Prostate gland (tissue), 2 donors: ENCODE measurements at regions of chr17 and their contacts with region 1.

Region 1: GRCh38 chr17:33328129-33328528 is 35.0 kb upstream of the ASIC2 start:
- DNase-seq: no peak
- H3K4me3 ChIP-seq: no peak overlapping the region
- H3K27ac ChIP-seq: no peak overlapping the region
- H3K4me1 ChIP-seq: no peaks in the 10 kb centered on the region
- H3K27me3 ChIP-seq: no peaks in the 10 kb centered on the region
- CTCF ChIP-seq: no peak
- POLR2A ChIP-seq: no peak

Region 2: GRCh38 chr17:33120103-33120502 is 208.0 kb before region 1 on chr17:
- intact Hi-C with region 1: no loop called
- DNase-seq: no peak
- H3K4me3 ChIP-seq: no peak overlapping the region
- H3K27ac ChIP-seq: no peak overlapping the region
- H3K4me1 ChIP-seq: no peaks in the 10 kb centered on the region
- H3K27me3 ChIP-seq: no peaks in the 10 kb centered on the region
- CTCF ChIP-seq: no peak
- POLR2A ChIP-seq: no peak

Region 3: GRCh38 chr17:33267260-33267790 is 60.8 kb before region 1 on chr17:
- intact Hi-C with region 1: loop called (anchors 10 kb)
- DNase-seq: no peak
- H3K4me3 ChIP-seq: no peak overlapping the region
- H3K27ac ChIP-seq: no peak overlapping the region
- H3K4me1 ChIP-seq: no peaks in the 10 kb centered on the region
- H3K27me3 ChIP-seq: no peaks in the 10 kb centered on the region
- CTCF ChIP-seq: no peak
- POLR2A ChIP-seq: no peak

Region 4: DNA sequence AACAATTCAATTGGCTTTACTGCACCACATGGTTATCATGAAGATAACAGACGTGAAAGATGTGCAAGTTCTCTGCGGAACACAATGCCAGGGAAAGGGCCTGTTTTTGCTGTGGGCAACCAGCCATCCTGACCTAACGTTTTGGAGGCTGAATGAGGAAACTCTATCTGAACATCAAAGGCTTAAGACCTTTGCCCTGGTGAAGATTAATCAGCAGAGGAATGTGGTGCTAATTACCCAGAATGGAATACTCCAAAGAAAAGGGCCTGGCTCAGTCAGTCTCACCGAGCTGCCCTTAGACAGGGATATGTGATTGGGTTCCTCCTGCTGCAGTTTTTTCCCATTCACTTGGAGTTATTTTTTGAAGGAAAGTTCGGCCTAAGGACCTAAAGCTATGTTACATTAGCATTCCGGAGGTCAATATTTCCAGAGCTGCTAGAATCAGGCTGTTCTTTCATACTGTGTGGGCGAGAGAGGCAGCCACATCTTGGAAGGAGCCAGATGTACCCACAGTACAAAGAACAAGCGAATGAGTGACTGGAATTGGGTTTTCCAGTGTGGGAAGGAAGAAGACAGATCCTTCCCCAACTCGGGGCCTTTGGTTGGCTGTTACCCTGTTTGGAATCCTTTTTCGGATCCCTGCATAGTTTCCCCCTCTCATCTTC is 50.6 kb before region 1 on chr17:
- intact Hi-C with region 1: no loop called
- DNase-seq: no peak
- H3K4me3 ChIP-seq: no peak overlapping the region
- H3K27ac ChIP-seq: no peak overlapping the region
- H3K4me1 ChIP-seq: no peaks in the 10 kb centered on the region
- H3K27me3 ChIP-seq: no peaks in the 10 kb centered on the region
- CTCF ChIP-seq: no peak
- POLR2A ChIP-seq: no peak

Region 5: DNA sequence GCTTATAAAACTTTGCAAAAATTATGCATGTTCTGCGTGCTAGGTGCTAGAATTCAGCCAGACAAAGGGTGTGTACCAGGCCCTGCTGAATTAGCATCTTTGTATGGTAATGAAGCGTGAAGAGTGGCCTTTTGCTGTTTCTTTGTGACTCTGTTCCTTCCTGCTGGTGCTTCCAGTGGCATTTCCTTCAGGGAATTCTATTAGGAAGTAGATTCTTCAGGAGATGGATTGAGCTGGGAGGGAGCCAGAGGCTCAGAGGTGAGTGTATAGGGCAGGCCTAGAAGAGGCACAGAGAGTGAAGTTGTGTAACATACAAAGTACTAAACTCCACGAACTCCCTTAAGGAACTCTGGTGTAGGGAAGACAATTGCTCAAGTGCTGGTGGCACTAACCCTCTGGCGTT is 38.9 kb after region 1 on chr17:
- intact Hi-C with region 1: no loop called
- DNase-seq: no peak
- H3K4me3 ChIP-seq: no peak overlapping the region
- H3K27ac ChIP-seq: no peak overlapping the region
- H3K4me1 ChIP-seq: no peaks in the 10 kb centered on the region
- H3K27me3 ChIP-seq: peaks cover 8% of the 10 kb centered on the region
- CTCF ChIP-seq: no peak
- POLR2A ChIP-seq: no peak